Ascending aorta (tissue), 2 donors: ENCODE measurements at regions of chr14 and their contacts with region 1.

Region 1: DNA sequence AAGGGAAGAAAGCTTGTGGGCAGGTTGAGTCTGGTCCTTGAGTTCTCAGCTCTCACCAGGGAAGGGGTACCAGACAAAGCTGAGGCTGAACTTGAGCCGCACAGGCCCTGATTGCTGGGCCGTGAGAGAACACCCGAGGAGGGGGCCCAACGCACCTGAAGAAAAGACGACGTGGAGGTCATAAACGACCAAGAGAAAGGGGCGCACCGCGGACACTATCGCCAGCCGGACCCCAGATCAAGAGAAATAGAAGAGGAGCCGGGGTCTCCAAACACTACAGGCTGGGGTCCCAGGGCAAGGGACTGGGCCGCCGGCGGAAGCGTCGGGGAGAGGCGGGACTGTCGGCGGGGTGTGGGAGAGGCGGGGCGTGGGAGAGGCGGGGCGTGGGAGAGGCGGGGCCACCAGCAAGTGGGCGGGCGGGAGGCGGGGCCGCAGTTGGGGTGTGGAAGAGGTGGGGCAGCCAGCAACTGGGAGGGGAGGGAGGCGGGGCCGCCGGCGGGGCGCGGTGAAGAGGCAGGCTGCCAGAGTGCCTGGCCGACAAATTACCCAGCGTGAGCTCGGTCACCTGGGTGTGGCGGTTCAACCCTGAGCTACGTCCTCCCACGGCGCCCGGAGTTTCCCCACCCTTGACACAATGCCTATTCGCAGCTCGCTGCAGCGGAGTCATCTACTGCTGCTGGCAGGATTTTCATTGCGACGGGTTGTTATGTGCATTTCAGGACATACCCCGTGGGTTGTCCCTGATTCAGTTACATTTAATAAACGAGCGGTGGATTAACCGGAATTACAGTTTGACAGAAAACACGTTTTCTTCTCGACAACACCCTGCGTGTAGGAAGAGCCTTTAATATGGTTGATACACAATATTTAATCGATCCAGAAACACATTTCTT is 15.5 kb upstream of the NEMF start:
- DNase-seq: peak; percentile 89 to 98
- H3K4me3 ChIP-seq: peak overlapping the region; percentile 64 to 66
- H3K27ac ChIP-seq: peak overlapping the region; percentile 89 to 90
- H3K4me1 ChIP-seq: peaks cover 3 to 8% of the 10 kb centered on the region in 2 donors
- H3K27me3 ChIP-seq: no peaks in the 10 kb centered on the region
- CTCF ChIP-seq: no peak

Region 2: DNA sequence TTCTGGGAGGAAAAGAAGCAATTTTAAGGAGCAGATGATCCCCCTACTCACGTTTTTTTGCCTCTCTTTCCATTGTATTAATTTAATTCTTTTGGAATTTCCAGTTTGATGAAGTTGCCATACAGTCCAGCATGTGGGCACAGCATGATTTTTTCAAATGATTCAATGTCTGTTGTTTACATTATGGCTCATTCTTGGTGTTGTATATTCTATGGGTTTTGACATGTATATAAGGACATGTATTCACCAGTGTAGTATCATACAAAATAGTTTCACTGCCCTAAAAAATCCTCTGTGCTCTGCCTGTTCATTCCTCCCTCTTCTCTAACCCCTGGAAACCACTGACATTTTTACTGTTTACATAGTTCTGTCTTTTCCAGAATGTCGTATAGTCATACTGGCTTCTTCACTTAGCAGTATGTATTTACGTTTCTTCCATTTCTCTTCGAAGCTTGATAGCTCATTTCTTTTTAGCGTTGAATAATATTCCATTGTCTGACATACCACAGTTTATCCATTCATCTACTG is 113.4 kb before region 1 on chr14:
- intact Hi-C with region 1: no loop called
- DNase-seq: no peak
- H3K4me3 ChIP-seq: no peak overlapping the region
- H3K27ac ChIP-seq: no peak overlapping the region
- H3K4me1 ChIP-seq: no peaks in the 10 kb centered on the region
- H3K27me3 ChIP-seq: no peaks in the 10 kb centered on the region
- CTCF ChIP-seq: no peak

Region 3: DNA sequence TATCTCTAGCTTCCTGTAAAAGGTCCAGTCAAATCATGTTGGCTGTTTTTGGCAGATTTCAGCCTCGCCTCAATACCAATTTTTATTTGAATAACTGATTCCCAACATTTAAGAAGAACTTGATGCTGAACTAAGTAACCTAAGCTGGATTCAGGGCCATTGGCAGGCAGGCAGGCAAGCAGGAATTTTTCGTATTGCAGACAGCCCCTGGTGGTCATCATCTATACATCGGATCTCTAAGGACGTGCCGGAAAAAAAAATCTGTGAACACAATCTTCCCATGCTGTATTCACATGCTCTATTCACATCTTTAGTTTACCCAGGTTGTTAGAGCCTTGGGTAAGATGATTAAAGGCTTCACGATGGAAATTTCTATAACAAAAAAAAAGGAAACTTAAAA is 241.3 kb after region 1 on chr14:
- intact Hi-C with region 1: loop called (anchors 1 kb)
- DNase-seq: no peak
- H3K4me3 ChIP-seq: no peak overlapping the region
- H3K27ac ChIP-seq: no peak overlapping the region
- H3K4me1 ChIP-seq: no peaks in the 10 kb centered on the region
- H3K27me3 ChIP-seq: no peaks in the 10 kb centered on the region
- CTCF ChIP-seq: no peak

Region 4: DNA sequence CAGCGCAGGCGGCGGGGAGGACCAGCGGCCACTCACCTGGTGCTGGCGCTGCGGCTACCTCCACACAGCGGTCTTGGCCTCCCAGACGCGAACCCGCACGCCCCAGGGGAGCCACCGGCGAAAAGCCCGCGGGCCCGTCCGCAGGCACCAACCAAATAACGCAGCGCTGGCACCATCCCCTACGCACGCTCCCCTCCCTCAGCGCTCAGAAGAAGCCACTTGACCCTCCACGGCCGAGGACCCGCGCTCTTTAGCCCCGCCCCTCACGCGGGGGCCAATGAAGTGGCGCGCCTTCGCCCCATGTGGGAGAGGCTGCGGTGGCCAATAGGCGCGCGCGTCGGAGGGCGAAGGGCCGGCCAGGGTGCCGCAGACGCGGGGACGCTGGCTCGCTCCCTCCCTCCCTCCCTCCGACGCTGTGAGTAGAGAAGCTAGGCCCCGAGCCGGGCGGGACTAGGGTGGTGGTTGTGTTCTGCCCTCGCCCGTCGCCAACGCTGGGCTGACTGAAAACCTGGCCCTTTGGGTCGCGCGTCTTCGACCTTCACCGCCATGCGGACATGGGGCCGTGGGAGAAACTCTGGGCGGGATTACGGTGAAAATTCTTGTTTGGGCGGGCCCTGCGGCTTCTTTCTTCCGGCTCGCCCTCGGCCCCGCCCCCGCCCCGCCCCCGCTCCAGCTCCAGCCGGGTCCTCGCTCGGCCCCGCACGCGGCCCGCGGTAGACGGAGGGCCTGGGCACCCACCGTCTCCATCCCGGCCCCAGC is 444.1 kb after region 1 on chr14 and contains the starts of genes DMAC2L and L2HGDH:
- intact Hi-C with region 1: loop called (anchors 10 kb)
- DNase-seq: peak; percentile 71 to 95
- H3K4me3 ChIP-seq: peak within 1 kb of the TSS; percentile 67 to 90
- H3K27ac ChIP-seq: peak within 1 kb of the TSS; percentile 89 to 92
- H3K4me1 ChIP-seq: peaks cover 0 to 8% of the 10 kb centered on the region in 2 donors
- H3K27me3 ChIP-seq: no peaks in the 10 kb centered on the region
- CTCF ChIP-seq: no peak
- total RNA-seq, gene DMAC2L: 13.5 TPM
- total RNA-seq, gene L2HGDH: 1.5 TPM